Activated CD4-positive, alpha-beta T cell treated with anti-CD3 and anti-CD28 coated beads, Interleukin-2, amount 10 ng/mL, durations not matched to agents 7 days and 5 days (primary cell): ENCODE measurements at regions of chr19 and their contacts with region 1.

Region 1: GRCh38 chr19:38786572-38787265 is 2.3 kb upstream of the LGALS7B start:
- DNase-seq: no peak
- H3K4me3 Mint-ChIP-seq: no peak overlapping the region
- H3K27ac Mint-ChIP-seq: no peak overlapping the region
- H3K4me1 Mint-ChIP-seq: peaks cover 7% of the 10 kb centered on the region
- H3K27me3 Mint-ChIP-seq: peaks cover 2% of the 10 kb centered on the region

Region 2: GRCh38 chr19:38559428-38560401 is 227.0 kb before region 1 on chr19:
- CTCF ChIA-PET with region 1: no interaction called
- POLR2A ChIA-PET with region 1: no interaction called
- DNase-seq: peak; percentile 49
- H3K4me3 Mint-ChIP-seq: peak overlapping the region; percentile 22
- H3K27ac Mint-ChIP-seq: peak overlapping the region; percentile 86
- H3K4me1 Mint-ChIP-seq: peaks cover 47% of the 10 kb centered on the region
- H3K27me3 Mint-ChIP-seq: peaks cover 32% of the 10 kb centered on the region

Region 3: GRCh38 chr19:38769635-38770211 is 17.0 kb before region 1 on chr19:
- CTCF ChIA-PET with region 1: interaction called, 10 read pairs
- POLR2A ChIA-PET with region 1: no interaction called
- DNase-seq: peak; percentile 91
- H3K4me3 Mint-ChIP-seq: peak overlapping the region; percentile 57
- H3K27ac Mint-ChIP-seq: peak overlapping the region; percentile 84
- H3K4me1 Mint-ChIP-seq: peaks cover 9% of the 10 kb centered on the region
- H3K27me3 Mint-ChIP-seq: peaks cover 2% of the 10 kb centered on the region